IMR-90 (cell line): ENCODE measurements at regions of chr12 and their contacts with region 1.

Region 1: GRCh38 chr12:47221256-47222023 is 141.7 kb upstream of the AMIGO2 start:
- DNase-seq: no peak
- ATAC-seq: no peak
- H3K4me3 ChIP-seq: no peak overlapping the region
- H3K27ac ChIP-seq: no peak overlapping the region
- H3K4me1 ChIP-seq: peaks cover 11% of the 10 kb centered on the region
- H3K27me3 ChIP-seq: no peaks in the 10 kb centered on the region
- CTCF ChIP-seq: no peak
- POLR2A ChIP-seq: no peak
- RAD21 ChIP-seq: no peak

Region 2: DNA sequence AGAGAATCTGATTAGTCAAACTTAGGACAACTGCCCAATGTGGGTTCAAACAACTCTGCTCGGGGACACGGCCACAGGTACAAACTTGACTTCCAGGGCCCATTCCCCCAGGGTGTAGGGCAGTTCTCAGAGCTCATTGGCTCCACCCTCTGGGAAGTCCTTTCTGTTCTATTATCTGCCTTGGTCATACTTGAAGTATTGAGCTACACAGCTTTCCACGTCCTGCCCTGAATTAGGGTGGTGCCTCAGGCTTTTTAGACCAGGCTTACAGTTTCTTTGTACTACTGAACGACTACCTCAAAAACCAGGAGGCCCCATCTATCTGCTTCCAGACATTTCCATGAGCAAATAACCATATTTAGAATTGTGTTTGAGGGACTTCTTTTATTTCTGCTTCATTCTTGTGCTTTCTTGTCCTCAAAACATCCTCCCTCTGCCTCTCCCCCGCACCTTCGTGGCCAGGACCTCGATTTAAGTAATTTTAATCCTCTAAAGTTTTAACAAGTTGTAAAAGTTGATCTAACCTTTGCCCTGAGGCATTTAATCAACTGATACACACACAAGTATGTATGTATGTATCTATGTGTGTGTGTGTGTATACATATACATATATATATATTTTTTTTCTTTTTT is 140.1 kb after region 1 on chr12:
- CTCF ChIA-PET with region 1: no interaction called
- POLR2A ChIA-PET with region 1: no interaction called
- dilution Hi-C with region 1: no loop called
- in situ Hi-C with region 1: no loop called
- intact Hi-C with region 1: no loop called
- DNase-seq: no peak
- ATAC-seq: no peak
- H3K4me3 ChIP-seq: no peak overlapping the region
- H3K27ac ChIP-seq: no peak overlapping the region
- H3K4me1 ChIP-seq: no peaks in the 10 kb centered on the region; the same call in 1 of the 2 replicates
- H3K27me3 ChIP-seq: no peaks in the 10 kb centered on the region
- CTCF ChIP-seq: no peak
- POLR2A ChIP-seq: no peak
- RAD21 ChIP-seq: no peak

Region 3: GRCh38 chr12:47377414-47378221 is 156.2 kb after region 1 on chr12:
- CTCF ChIA-PET with region 1: no interaction called
- POLR2A ChIA-PET with region 1: interaction called, 20 read pairs
- dilution Hi-C with region 1: no loop called
- in situ Hi-C with region 1: no loop called
- intact Hi-C with region 1: no loop called
- DNase-seq: peak; percentile 100
- ATAC-seq: peak; percentile 97
- H3K4me3 ChIP-seq: peak overlapping the region; percentile 1; the same call in 1 of the 2 replicates
- H3K27ac ChIP-seq: peak overlapping the region; percentile 25; the same call in 1 of the 2 replicates
- H3K4me1 ChIP-seq: peaks cover 7% of the 10 kb centered on the region
- H3K27me3 ChIP-seq: no peaks in the 10 kb centered on the region
- CTCF ChIP-seq: no peak
- POLR2A ChIP-seq: peak; percentile 83
- RAD21 ChIP-seq: no peak; the same call in 1 of the 2 replicates